CD4-positive, alpha-beta memory T cell (primary cell): ENCODE measurements at regions of chr5 and their contacts with region 1.

Region 1: DNA sequence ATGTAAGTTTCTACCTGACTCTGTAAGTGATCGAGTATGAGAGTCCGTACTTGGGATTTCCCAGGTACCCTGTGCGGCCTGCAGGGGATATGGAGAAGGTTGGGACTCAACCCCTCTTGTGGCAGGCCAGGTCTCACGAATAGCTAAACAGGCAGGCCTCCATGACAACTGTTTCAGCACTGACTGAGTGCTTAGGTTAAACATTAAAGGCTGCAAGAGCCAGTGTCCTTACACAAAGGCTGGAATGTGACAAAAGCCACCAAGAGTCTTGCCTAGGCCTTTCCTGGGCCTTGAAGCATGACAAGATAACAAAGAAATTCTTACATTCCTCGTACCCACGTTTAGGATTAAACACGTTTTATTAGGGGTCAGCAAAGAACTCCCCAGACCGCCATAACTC is 58.6 kb downstream of the THBS4 start:
- DNase-seq: no peak
- H3K4me3 ChIP-seq: no peak overlapping the region
- H3K4me3 Mint-ChIP-seq: peak overlapping the region in 1 of 8 donors; percentile 34
- H3K27ac ChIP-seq: no peak overlapping the region
- H3K27ac Mint-ChIP-seq: peak overlapping the region; percentile 31 to 90 (median 87)
- H3K4me1 ChIP-seq: peaks cover 30% of the 10 kb centered on the region
- H3K4me1 Mint-ChIP-seq: peaks cover 20 to 47% (median 33%) of the 10 kb centered on the region in 4 donors
- H3K27me3 ChIP-seq: no peaks in the 10 kb centered on the region
- H3K27me3 Mint-ChIP-seq: no peaks in the 10 kb centered on the region

Region 2: GRCh38 chr5:79865579-79865978 is 228.2 kb before region 1 on chr5:
- CTCF ChIA-PET with region 1: no interaction called
- POLR2A ChIA-PET with region 1: no interaction called
- intact Hi-C with region 1: no loop called
- DNase-seq: no peak
- H3K4me3 ChIP-seq: no peak overlapping the region
- H3K4me3 Mint-ChIP-seq: no peak overlapping the region
- H3K27ac ChIP-seq: no peak overlapping the region
- H3K27ac Mint-ChIP-seq: no peak overlapping the region
- H3K4me1 ChIP-seq: no peaks in the 10 kb centered on the region
- H3K4me1 Mint-ChIP-seq: no peaks in the 10 kb centered on the region
- H3K27me3 ChIP-seq: no peaks in the 10 kb centered on the region
- H3K27me3 Mint-ChIP-seq: peaks cover 21 to 22% of the 10 kb centered on the region in 2 donors

Region 3: GRCh38 chr5:80125962-80126480 is 32.2 kb after region 1 on chr5:
- CTCF ChIA-PET with region 1: interaction called, 9 read pairs
- POLR2A ChIA-PET with region 1: interaction called, 4 read pairs
- intact Hi-C with region 1: loop called (anchors 2 kb)
- DNase-seq: peak in 1 of 5 donors; percentile 33
- H3K4me3 ChIP-seq: no peak overlapping the region
- H3K4me3 Mint-ChIP-seq: peak overlapping the region in 7 of 8 donors; percentile 8 to 82 (median 44)
- H3K27ac ChIP-seq: no peak overlapping the region
- H3K27ac Mint-ChIP-seq: peak overlapping the region; percentile 10 to 85 (median 64)
- H3K4me1 ChIP-seq: peaks cover 37% of the 10 kb centered on the region
- H3K4me1 Mint-ChIP-seq: peaks cover 47 to 67% (median 55%) of the 10 kb centered on the region in 4 donors
- H3K27me3 ChIP-seq: no peaks in the 10 kb centered on the region
- H3K27me3 Mint-ChIP-seq: no peaks in the 10 kb centered on the region

Region 4: DNA sequence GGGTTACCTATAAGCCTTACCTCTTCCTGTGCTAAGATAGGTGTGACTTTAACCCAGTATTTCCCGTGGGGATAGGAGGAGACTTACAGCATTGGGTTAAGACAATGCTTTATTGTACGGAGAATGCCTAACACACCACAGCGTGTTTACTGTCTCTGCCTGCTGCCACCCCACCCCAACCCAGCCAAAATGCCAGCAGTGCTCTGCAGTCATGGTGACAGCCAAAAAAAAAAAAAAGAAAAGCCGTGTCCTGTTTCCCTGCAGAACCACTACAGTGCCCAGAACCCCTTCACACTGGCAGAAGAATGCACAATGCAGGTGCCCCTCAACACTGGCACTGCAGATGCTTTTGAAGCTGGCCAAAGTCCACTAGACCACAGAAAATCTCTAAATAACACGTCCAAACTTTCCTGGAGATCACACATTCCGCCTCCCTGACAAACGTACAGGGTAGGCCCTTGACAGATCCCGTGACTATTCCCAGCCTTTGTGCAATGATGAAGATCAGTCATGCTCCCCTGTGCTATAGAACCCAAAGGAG is 59.9 kb after region 1 on chr5:
- CTCF ChIA-PET with region 1: interaction called, 8 read pairs
- POLR2A ChIA-PET with region 1: interaction called, 5 read pairs
- intact Hi-C with region 1: loop called (anchors 5 kb)
- DNase-seq: peak in 4 of 5 donors; percentile 45 to 58 (median 50)
- H3K4me3 ChIP-seq: no peak overlapping the region
- H3K4me3 Mint-ChIP-seq: peak overlapping the region in 7 of 8 donors; percentile 66 to 85 (median 79)
- H3K27ac ChIP-seq: no peak overlapping the region
- H3K27ac Mint-ChIP-seq: peak overlapping the region; percentile 83 to 97 (median 96)
- H3K4me1 ChIP-seq: peaks cover 57% of the 10 kb centered on the region
- H3K4me1 Mint-ChIP-seq: peaks cover 48 to 81% (median 62%) of the 10 kb centered on the region in 4 donors
- H3K27me3 ChIP-seq: no peaks in the 10 kb centered on the region
- H3K27me3 Mint-ChIP-seq: no peaks in the 10 kb centered on the region

Region 5: GRCh38 chr5:80204808-80205614 is 111.2 kb after region 1 on chr5:
- CTCF ChIA-PET with region 1: interaction called, 16 read pairs
- POLR2A ChIA-PET with region 1: interaction called, 5 read pairs
- intact Hi-C with region 1: no loop called
- DNase-seq: no peak
- H3K4me3 ChIP-seq: no peak overlapping the region
- H3K4me3 Mint-ChIP-seq: peak overlapping the region; percentile 40 to 71 (median 58)
- H3K27ac ChIP-seq: peak overlapping the region; percentile 16
- H3K27ac Mint-ChIP-seq: peak overlapping the region; percentile 81 to 99 (median 88)
- H3K4me1 ChIP-seq: peaks cover 82% of the 10 kb centered on the region
- H3K4me1 Mint-ChIP-seq: peaks cover 72 to 94% (median 82%) of the 10 kb centered on the region in 4 donors
- H3K27me3 ChIP-seq: no peaks in the 10 kb centered on the region
- H3K27me3 Mint-ChIP-seq: no peaks in the 10 kb centered on the region

Region 6: GRCh38 chr5:80268916-80269315 is 175.1 kb after region 1 on chr5:
- CTCF ChIA-PET with region 1: interaction called, 144 read pairs
- POLR2A ChIA-PET with region 1: interaction called, 7 read pairs
- intact Hi-C with region 1: no loop called
- DNase-seq: no peak
- H3K4me3 ChIP-seq: no peak overlapping the region
- H3K4me3 Mint-ChIP-seq: peak overlapping the region in 7 of 8 donors; percentile 36 to 87 (median 61)
- H3K27ac ChIP-seq: peak overlapping the region; percentile 9
- H3K27ac Mint-ChIP-seq: peak overlapping the region; percentile 77 to 99 (median 92)
- H3K4me1 ChIP-seq: peaks cover 34% of the 10 kb centered on the region
- H3K4me1 Mint-ChIP-seq: peaks cover 28 to 48% (median 39%) of the 10 kb centered on the region in 4 donors
- H3K27me3 ChIP-seq: no peaks in the 10 kb centered on the region
- H3K27me3 Mint-ChIP-seq: no peaks in the 10 kb centered on the region

Region 7: GRCh38 chr5:80308526-80308925 is 214.7 kb after region 1 on chr5:
- CTCF ChIA-PET with region 1: interaction called, 286 read pairs
- POLR2A ChIA-PET with region 1: interaction called, 18 read pairs
- intact Hi-C with region 1: loop called (anchors 1 kb)
- DNase-seq: no peak
- H3K4me3 ChIP-seq: no peak overlapping the region
- H3K4me3 Mint-ChIP-seq: no peak overlapping the region
- H3K27ac ChIP-seq: no peak overlapping the region
- H3K27ac Mint-ChIP-seq: no peak overlapping the region
- H3K4me1 ChIP-seq: no peaks in the 10 kb centered on the region
- H3K4me1 Mint-ChIP-seq: peaks cover 0 to 1% (median 0%) of the 10 kb centered on the region in 4 donors
- H3K27me3 ChIP-seq: no peaks in the 10 kb centered on the region
- H3K27me3 Mint-ChIP-seq: no peaks in the 10 kb centered on the region